Adrenal gland (tissue), 19 donors: ENCODE measurements at regions of chr11 and their contacts with region 1.

Region 1: GRCh38 chr11:124800226-124800929 is at the start of gene MSANTD2:
- DNase-seq: peak; percentile 72 to 83 (median 80)
- H3K4me3 ChIP-seq: peak within 1 kb of the TSS; percentile 77 to 98 (median 82)
- H3K27ac ChIP-seq: peak within 1 kb of the TSS; percentile 94 to 98 (median 97)
- H3K4me1 ChIP-seq: peaks cover 7 to 24% of the 10 kb centered on the region in 2 donors
- H3K27me3 ChIP-seq: no peaks in the 10 kb centered on the region
- CTCF ChIP-seq: no peak
- POLR2A ChIP-seq: peak; percentile 77 to 78
- total RNA-seq, gene MSANTD2: 4.4 to 16.2 (median 6.4) TPM

Region 2: GRCh38 chr11:124277804-124278203 is 522.6 kb before region 1 on chr11:
- intact Hi-C with region 1: no loop called
- DNase-seq: no peak
- H3K4me3 ChIP-seq: no peak overlapping the region
- H3K27ac ChIP-seq: no peak overlapping the region
- H3K4me1 ChIP-seq: no peaks in the 10 kb centered on the region
- H3K27me3 ChIP-seq: no peaks in the 10 kb centered on the region
- CTCF ChIP-seq: no peak
- POLR2A ChIP-seq: no peak

Region 3: DNA sequence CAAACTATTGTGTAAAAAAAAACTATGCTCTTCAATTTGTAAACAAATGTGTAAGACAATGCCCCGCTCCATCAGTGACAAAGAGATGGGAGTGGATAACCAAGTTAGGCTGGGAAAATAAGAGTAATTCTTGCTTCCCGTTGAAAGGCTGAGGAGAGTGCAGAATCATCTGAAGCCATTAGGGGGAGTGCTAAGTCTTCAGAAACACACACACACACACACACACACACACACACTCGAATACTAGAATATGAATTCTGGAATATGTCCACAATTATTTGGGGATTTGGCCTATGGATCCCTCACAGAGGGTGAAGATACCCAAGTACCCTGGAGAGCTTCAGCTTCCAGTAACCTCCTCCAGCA is 37.1 kb after region 1 on chr11:
- intact Hi-C with region 1: loop called in 1 of 2 experiments (anchors 5 kb)
- DNase-seq: peak in 2 of 7 donors; percentile 19 to 24
- H3K4me3 ChIP-seq: no peak overlapping the region
- H3K27ac ChIP-seq: no peak overlapping the region
- H3K4me1 ChIP-seq: peaks cover 8 to 14% of the 10 kb centered on the region in 2 donors
- H3K27me3 ChIP-seq: peaks cover 56% of the 10 kb centered on the region
- CTCF ChIP-seq: peak in 1 of 6 experiments; percentile 46
- POLR2A ChIP-seq: no peak